GM10248 (cell line): ENCODE measurements at regions of chr11 and their contacts with region 1.

Region 1: GRCh38 chr11:65471410-65471762 is 27.5 kb upstream of the MALAT1 start:
- DNase-seq: peak; percentile 45
- CTCF ChIP-seq: peak; percentile 70

Region 2: DNA sequence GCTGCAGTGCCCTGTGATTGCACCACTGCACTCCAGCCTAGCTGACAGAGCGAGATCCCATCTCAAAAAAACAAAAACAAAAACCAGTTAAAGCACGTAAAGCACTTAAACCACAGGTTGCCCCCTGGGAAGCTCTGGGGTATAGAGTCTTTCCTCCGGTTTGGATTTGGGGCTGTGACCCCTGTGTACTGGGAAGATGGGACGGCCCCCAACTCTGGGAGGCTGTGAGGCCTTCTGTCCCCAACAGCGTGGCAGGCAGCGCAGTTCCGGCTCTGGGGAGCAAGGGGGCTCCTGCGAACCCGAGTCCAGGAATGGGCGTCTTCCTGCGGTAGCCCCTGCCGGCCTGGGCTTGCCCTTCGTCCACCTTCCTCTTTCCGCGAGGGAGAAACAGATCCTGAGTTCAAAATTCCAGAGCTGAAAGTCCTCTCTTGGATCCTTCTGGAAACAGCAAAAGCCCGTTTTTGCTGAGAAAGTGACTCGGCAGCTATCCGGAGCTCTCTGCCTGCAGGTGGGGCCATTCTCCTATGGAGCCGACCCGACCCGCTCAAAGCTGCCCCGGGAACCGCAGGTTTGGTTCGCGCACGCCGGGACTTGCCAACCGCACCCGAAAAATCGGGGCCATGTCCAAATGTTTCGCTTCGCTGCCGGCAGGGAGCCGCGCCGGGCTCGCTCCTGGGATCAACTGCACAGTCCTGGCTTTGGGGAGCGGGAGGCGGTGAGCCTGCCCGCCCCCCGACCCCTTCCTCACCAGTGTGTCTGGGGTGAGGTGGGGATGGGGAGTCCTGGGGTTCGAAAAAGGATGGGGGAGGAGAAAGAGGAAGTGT is 245.9 kb before region 1 on chr11:
- CTCF ChIA-PET with region 1: no interaction called
- POLR2A ChIA-PET with region 1: no interaction called
- DNase-seq: peak; percentile 84
- CTCF ChIP-seq: peak; percentile 53

Region 3: DNA sequence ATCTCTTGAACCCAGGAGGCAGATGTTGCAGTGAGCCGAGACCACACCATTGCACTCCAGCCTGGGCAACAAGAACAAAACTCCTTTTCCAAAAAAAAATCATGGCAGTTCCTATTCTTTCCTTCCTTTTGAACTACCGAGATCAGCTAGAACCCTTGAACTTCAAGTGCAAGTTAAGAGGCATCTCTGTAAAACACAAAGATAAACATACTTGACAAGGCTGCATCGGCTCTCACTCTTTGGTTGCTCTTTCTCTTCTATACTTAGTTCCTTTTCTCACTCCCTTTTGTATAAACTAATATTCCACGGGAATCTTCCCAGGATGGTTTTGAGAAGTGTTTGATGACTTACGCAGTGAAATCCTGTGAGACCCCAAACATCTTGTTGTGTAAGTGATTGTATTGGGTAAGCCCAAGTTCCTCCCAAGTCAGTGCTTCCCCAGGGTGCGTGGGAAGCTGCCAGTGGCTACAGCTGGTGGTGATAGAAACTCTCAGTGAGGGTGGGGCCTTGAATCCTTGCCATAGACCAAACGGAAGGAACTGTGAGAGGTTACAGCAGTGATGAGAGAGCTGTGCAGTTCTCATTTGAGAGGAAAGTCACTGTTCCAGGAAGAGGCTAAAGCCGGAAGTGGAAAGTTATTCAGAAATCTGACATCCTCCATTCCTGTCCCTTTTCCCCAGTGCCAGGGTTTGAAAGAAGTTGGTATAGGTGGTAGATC is 180.8 kb before region 1 on chr11:
- CTCF ChIA-PET with region 1: no interaction called
- POLR2A ChIA-PET with region 1: no interaction called
- DNase-seq: no peak
- CTCF ChIP-seq: no peak

Region 4: DNA sequence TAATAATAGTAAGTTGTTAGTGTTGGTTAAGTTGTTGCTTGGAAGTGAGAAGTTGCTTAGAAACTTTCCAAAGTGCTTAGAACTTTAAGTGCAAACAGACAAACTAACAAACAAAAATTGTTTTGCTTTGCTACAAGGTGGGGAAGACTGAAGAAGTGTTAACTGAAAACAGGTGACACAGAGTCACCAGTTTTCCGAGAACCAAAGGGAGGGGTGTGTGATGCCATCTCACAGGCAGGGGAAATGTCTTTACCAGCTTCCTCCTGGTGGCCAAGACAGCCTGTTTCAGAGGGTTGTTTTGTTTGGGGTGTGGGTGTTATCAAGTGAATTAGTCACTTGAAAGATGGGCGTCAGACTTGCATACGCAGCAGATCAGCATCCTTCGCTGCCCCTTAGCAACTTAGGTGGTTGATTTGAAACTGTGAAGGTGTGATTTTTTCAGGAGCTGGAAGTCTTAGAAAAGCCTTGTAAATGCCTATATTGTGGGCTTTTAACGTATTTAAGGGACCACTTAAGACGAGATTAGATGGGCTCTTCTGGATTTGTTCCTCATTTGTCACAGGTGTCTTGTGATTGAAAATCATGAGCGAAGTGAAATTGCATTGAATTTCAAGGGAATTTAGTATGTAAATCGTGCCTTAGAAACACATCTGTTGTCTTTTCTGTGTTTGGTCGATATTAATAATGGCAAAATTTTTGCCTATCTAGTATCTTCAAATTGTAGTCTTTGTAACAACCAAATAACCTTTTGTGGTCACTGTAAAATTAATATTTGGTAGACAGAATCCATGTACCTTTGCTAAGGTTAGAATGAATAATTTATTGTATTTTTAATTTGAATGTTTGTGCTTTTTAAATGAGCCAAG is 46.0 kb before region 1 on chr11:
- CTCF ChIA-PET with region 1: interaction called, 6 read pairs
- POLR2A ChIA-PET with region 1: interaction called, 30 read pairs
- DNase-seq: no peak
- CTCF ChIP-seq: no peak

Region 5: GRCh38 chr11:65448418-65449105 is 22.8 kb before region 1 on chr11:
- CTCF ChIA-PET with region 1: interaction called, 11 read pairs
- POLR2A ChIA-PET with region 1: interaction called, 4 read pairs
- DNase-seq: no peak
- CTCF ChIP-seq: no peak

Region 6: DNA sequence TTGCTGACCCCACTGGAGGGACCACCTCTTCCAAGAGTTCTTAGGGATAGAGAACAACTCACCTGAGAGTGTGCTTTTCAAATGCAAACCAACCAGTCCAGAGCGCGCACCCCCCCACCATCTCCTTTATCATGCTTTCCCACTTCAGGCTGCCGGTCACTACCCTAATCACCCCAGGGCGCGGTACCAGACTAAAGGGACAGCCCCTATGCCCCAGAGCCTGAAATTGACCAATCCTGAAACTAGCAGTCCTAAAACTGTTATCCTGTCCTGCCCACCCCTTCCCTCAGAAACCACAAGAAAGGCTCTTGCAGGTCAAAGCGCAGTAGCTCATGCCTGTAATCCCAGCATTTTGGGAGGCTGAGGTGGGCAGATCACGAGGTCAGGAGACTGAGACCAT is 11.8 kb before region 1 on chr11:
- CTCF ChIA-PET with region 1: interaction called, 65 read pairs
- POLR2A ChIA-PET with region 1: interaction called, 9 read pairs
- DNase-seq: peak; percentile 37
- CTCF ChIP-seq: no peak

Region 7: DNA sequence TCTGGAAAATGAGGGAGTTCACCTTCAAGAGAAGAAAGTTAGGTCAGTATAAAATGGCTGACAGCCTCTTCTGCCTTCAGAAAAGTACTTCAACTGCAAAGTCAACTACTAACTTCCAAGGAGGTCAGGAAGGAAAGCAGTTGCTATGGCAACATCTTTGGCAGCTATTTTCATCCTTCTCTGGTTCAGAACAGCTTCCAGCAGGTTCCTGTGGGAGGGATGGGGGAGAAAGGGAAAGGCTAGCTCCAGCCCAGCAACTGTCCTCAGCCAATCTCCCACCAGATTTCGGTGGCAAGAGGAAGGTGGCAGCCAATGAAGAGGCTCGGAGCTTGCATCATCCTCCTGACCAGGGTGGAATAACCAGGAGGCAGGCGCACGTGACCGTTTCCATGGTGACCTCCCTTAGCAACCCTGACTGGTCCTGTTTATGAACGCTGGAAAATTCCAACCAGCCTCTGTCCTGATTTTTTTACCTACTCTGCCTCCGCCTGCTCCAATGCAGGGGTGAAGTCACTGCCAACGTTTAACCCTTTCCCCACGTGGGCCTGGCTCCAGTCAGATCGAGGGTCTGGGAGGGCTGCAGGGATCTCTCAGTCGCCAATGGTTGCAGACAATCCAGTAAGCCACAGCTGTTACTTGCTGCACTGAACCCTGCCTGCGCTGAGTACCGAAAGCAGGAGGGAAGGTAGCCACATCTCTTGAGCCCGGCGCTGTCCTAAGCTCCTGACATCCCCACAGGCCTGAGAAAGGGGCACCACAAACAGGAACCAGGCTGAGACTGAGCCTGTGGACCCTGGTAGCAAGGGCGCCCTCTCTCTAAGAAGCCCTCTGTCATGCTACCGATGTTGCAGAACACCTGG is 16.3 kb after region 1 on chr11:
- CTCF ChIA-PET with region 1: interaction called, 117 read pairs
- POLR2A ChIA-PET with region 1: interaction called, 22 read pairs
- DNase-seq: peak; percentile 78
- CTCF ChIP-seq: no peak

Region 8: GRCh38 chr11:65497141-65498041 is 26.0 kb after region 1 on chr11:
- CTCF ChIA-PET with region 1: interaction called, 117 read pairs
- POLR2A ChIA-PET with region 1: interaction called, 305 read pairs
- DNase-seq: peak; percentile 87
- CTCF ChIP-seq: no peak

Region 9: GRCh38 chr11:65506770-65507505 is 35.6 kb after region 1 on chr11:
- CTCF ChIA-PET with region 1: interaction called, 25 read pairs
- POLR2A ChIA-PET with region 1: interaction called, 305 read pairs
- DNase-seq: no peak
- CTCF ChIP-seq: no peak